IMR-90 (cell line): ENCODE measurements at regions of chr11 and their contacts with region 1.

Region 1: DNA sequence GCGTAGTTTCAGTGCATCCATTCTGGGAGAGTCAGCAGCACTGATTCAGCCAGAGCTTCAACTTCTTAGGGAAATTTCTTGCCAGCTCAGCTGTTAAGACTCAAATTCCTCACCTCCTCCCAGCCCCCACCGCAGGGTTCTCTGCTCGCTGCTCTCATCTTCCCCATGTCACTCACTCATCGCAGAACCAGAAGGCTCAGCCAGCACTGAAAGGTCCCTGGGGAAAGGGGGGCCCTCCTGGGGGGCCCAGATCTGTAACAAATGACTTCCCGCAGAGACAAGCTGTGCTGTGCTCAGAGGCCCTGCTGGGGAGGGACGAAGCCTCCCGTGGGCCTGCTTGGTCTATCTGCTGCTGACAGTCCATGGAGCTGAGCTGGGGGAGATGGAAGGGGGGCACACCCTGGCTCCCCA is 220.6 kb downstream of the NTM start:
- DNase-seq: no peak
- ATAC-seq: no peak
- H3K4me3 ChIP-seq: no peak overlapping the region
- H3K27ac ChIP-seq: no peak overlapping the region
- H3K4me1 ChIP-seq: no peaks in the 10 kb centered on the region
- H3K27me3 ChIP-seq: peaks cover 5% of the 10 kb centered on the region
- CTCF ChIP-seq: no peak
- POLR2A ChIP-seq: no peak
- RAD21 ChIP-seq: no peak

Region 2: GRCh38 chr11:131609337-131609736 is 18.3 kb after region 1 on chr11:
- CTCF ChIA-PET with region 1: no interaction called
- POLR2A ChIA-PET with region 1: interaction called, 24 read pairs
- dilution Hi-C with region 1: no loop called
- in situ Hi-C with region 1: no loop called
- intact Hi-C with region 1: no loop called
- DNase-seq: peak; percentile 46
- ATAC-seq: no peak
- H3K4me3 ChIP-seq: no peak overlapping the region
- H3K27ac ChIP-seq: no peak overlapping the region
- H3K4me1 ChIP-seq: no peaks in the 10 kb centered on the region
- H3K27me3 ChIP-seq: peaks cover 8% of the 10 kb centered on the region
- CTCF ChIP-seq: no peak
- POLR2A ChIP-seq: no peak
- RAD21 ChIP-seq: no peak